Cardiac septum (tissue), 1 donor: ENCODE measurements at regions of chr14 and their contacts with region 1.

Region 1: GRCh38 chr14:89767861-89768268 is 186.7 kb downstream of the EFCAB11 start:
- DNase-seq: no peak

Region 2: GRCh38 chr14:89178802-89179535 is 588.9 kb before region 1 on chr14:
- intact Hi-C with region 1: loop called (anchors 10 kb)
- DNase-seq: no peak

Region 3: GRCh38 chr14:89630101-89630829 is 137.6 kb before region 1 on chr14:
- intact Hi-C with region 1: loop called (anchors 10 kb)
- DNase-seq: no peak

Region 4: GRCh38 chr14:89750281-89750755 is 17.5 kb before region 1 on chr14:
- intact Hi-C with region 1: no loop called
- DNase-seq: no peak